Activated naive CD4-positive, alpha-beta T cell treated with anti-CD3 and anti-CD28 coated beads for 36 hours (primary cell): ENCODE measurements at regions of chr21 and their contacts with region 1.

Region 1: DNA sequence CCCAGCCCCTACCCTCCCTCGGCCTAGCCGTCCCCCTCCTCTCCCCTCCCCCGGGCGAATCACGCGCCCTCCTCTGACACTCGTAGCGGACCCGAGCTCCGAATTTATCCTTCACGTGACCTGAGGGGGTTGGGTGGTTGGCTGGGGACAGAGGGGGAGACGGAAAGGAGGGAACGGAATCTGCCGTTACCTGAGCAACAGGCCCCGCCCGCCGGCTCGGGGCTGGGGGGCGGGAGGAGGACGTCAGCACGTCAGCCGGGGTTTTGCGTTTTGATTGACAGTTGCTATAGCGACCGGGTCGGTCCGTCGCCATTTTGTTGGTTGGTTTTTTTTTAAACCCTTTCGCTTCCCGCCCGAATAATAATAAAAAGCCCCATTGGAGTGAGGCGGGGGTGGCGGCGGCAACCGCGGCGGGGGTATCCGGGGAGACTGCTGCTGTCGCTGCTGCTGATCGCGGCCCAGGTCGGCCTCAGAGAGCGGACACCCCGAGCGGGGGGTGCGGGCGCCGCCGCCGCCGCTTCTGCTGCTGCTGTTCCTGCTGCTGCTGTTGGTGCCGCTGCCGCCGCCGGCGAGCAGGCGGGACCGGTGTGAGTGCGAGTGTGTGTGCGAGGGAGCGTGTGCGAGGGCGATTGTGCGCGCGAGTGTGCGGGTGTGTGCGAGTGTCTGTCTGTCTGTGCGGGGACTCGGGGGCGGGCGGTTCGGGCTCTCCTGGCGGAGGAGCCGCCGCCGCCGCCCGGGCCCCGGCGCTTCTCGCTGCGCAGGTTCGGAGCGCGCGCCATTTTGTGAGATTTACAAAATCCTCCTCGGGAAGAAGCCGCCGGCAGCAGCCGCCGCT is at the start of gene DYRK1A:
- DNase-seq: peak; percentile 99
- H3K4me3 Mint-ChIP-seq: peak within 1 kb of the TSS; percentile 99
- H3K27ac Mint-ChIP-seq: peak within 1 kb of the TSS; percentile 100
- H3K4me1 Mint-ChIP-seq: peaks cover 34% of the 10 kb centered on the region
- H3K27me3 Mint-ChIP-seq: no peaks in the 10 kb centered on the region
- total RNA-seq, gene DYRK1A: 49.8 to 51.4 TPM

Region 2: GRCh38 chr21:36989699-36990507 is 376.8 kb before region 1 on chr21:
- CTCF ChIA-PET with region 1: no interaction called
- intact Hi-C with region 1: loop called (anchors 10 kb)
- DNase-seq: peak; percentile 89
- H3K4me3 Mint-ChIP-seq: peak overlapping the region; percentile 80
- H3K27ac Mint-ChIP-seq: peak overlapping the region; percentile 65
- H3K4me1 Mint-ChIP-seq: peaks cover 38% of the 10 kb centered on the region
- H3K27me3 Mint-ChIP-seq: no peaks in the 10 kb centered on the region

Region 3: GRCh38 chr21:37208056-37208721 is 158.5 kb before region 1 on chr21:
- CTCF ChIA-PET with region 1: no interaction called
- intact Hi-C with region 1: no loop called
- DNase-seq: peak; percentile 69
- H3K4me3 Mint-ChIP-seq: peak overlapping the region; percentile 36
- H3K27ac Mint-ChIP-seq: peak overlapping the region; percentile 0
- H3K4me1 Mint-ChIP-seq: peaks cover 17% of the 10 kb centered on the region
- H3K27me3 Mint-ChIP-seq: no peaks in the 10 kb centered on the region

Region 4: GRCh38 chr21:37348664-37349063 is 18.0 kb before region 1 on chr21:
- CTCF ChIA-PET with region 1: no interaction called
- intact Hi-C with region 1: no loop called
- DNase-seq: no peak
- H3K4me3 Mint-ChIP-seq: no peak overlapping the region
- H3K27ac Mint-ChIP-seq: no peak overlapping the region
- H3K4me1 Mint-ChIP-seq: no peaks in the 10 kb centered on the region
- H3K27me3 Mint-ChIP-seq: no peaks in the 10 kb centered on the region

Region 5: DNA sequence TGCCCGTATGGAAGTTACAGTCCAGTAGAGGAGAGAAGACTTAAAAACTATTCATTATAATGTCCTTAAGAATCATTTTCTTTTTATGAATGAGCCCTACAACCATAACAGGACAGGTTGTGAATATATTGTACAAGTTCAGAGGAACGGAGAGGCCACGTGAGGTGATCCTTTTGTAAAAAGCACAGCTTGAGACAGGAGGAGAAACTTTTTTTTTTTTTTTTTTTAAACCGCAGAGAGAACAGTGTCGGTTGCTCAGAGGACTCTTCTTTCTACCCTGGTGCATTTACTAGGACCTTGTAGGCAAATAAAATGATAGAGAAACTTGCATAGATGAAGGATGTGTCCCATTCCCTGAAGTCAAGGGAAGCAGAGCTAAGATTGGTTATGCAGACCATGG is 32.0 kb after region 1 on chr21:
- CTCF ChIA-PET with region 1: interaction called, 4 read pairs
- intact Hi-C with region 1: loop called (anchors 2 kb)
- DNase-seq: peak; percentile 44
- H3K4me3 Mint-ChIP-seq: peak overlapping the region; percentile 7
- H3K27ac Mint-ChIP-seq: peak overlapping the region; percentile 1
- H3K4me1 Mint-ChIP-seq: peaks cover 80% of the 10 kb centered on the region
- H3K27me3 Mint-ChIP-seq: no peaks in the 10 kb centered on the region

Region 6: DNA sequence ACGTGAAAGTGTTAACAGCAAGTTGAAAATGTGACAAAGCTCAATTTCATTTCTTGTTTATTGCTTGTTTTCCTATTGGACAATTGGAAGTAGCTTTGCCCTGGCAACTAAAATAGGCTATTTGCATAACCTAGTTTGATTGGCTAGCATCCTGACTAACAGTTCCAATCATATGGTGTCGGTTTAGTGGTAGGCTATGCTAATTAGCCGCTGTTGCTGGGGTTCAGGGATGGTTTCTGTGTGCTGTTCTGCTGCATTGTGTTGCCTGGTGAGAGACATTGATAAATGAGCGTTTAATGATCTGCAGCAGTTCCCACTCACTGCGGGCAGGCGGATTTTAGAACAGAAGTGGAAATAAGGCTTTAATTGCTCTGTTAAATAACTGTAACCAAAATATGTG is 68.4 kb after region 1 on chr21:
- CTCF ChIA-PET with region 1: no interaction called
- intact Hi-C with region 1: loop called (anchors 2 kb)
- DNase-seq: peak; percentile 59
- H3K4me3 Mint-ChIP-seq: no peak overlapping the region
- H3K27ac Mint-ChIP-seq: no peak overlapping the region
- H3K4me1 Mint-ChIP-seq: peaks cover 40% of the 10 kb centered on the region
- H3K27me3 Mint-ChIP-seq: no peaks in the 10 kb centered on the region

Region 7: DNA sequence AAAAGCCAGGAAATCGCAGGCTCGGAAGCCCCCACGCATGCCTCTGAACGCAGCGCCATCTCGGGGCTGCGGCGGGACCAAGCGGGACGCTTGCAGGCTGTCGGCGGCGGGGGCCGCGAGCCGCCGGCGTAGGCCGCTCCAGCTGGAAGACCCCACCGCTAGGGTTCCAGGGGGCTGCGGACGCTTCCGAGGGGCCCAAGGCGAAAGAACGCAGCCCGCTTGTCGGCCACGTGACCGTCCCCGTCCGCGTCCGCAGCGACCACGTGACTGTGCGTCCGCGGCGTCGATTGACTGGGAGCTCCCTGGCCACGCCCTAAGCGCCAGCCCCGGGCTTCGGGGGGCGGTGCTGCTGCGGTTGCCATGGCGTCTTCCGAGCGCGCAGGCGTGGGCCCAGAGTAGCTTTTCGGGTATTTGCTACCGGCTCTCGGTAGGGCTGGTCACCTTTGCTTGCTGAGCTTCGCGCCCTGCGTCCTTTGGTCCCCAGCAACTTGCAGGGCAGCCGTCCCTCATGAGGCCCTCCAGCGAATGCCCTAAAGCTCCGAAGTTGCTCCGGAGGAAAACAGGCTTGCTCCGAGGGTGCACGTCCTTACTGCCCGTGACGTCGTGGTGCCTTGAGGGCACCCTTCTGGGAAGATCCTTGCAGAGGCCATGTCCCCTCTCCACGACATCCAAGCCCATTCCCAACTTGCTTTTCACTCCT is 197.1 kb after region 1 on chr21:
- CTCF ChIA-PET with region 1: no interaction called
- intact Hi-C with region 1: loop called (anchors 1 kb)
- DNase-seq: peak; percentile 92
- H3K4me3 Mint-ChIP-seq: peak overlapping the region; percentile 88
- H3K27ac Mint-ChIP-seq: peak overlapping the region; percentile 99
- H3K4me1 Mint-ChIP-seq: peaks cover 20% of the 10 kb centered on the region
- H3K27me3 Mint-ChIP-seq: no peaks in the 10 kb centered on the region